CD8-positive, alpha-beta T cell (primary cell): ENCODE measurements at regions of chr3 and their contacts with region 1.

Region 1: GRCh38 chr3:56988458-56989168 is 71.9 kb upstream of the SPATA12 start:
- DNase-seq: peak; percentile 21 to 84 (median 76)
- ATAC-seq: peak; percentile 69
- H3K4me3 ChIP-seq: no peak overlapping the region
- H3K4me3 Mint-ChIP-seq: no peak overlapping the region
- H3K27ac ChIP-seq: no peak overlapping the region
- H3K27ac Mint-ChIP-seq: no peak overlapping the region
- H3K4me1 ChIP-seq: peaks cover 11% of the 10 kb centered on the region
- H3K4me1 Mint-ChIP-seq: peaks cover 11% of the 10 kb centered on the region
- H3K27me3 ChIP-seq: peaks cover 0 to 2% of the 10 kb centered on the region in 2 experiments
- H3K27me3 Mint-ChIP-seq: peaks cover 8% of the 10 kb centered on the region
- CTCF ChIP-seq: peak; percentile 90

Region 2: DNA sequence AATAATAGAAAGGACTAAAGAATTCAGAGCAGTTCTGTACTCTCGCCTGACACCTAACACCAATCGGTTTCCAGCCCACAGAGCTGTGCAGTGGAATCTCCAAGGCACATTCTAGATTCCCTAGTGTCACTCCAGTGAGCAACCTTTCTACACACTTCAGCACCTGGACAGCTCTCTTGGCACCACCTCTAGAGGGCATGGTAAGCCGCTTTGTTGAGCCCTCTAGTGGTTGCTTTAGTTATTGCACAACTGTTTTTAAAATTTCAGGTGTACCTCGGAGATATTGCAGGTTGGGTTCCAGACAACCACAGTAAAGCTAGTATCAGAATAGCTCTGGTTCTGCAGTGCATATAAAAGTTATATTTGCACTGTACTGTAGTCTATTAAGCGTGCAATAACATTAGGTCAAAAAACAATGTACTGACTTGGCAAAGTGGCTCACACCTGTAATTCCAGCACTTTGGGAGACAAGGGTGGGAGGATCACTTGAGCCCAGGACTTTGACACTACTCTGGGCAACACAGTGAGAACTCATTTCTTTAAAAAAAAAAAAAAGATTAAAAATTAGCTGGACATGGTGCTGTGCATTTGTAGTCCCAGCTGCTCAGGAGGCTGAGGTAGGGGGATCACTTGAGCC is 493.8 kb before region 1 on chr3:
- CTCF ChIA-PET with region 1: no interaction called
- POLR2A ChIA-PET with region 1: no interaction called
- intact Hi-C with region 1: loop called in 1 of 2 experiments (anchors 2 kb)
- DNase-seq: peak; percentile 47 to 86 (median 72)
- ATAC-seq: peak; percentile 100
- H3K4me3 ChIP-seq: no peak overlapping the region
- H3K4me3 Mint-ChIP-seq: no peak overlapping the region
- H3K27ac ChIP-seq: no peak overlapping the region
- H3K27ac Mint-ChIP-seq: no peak overlapping the region
- H3K4me1 ChIP-seq: no peaks in the 10 kb centered on the region
- H3K4me1 Mint-ChIP-seq: no peaks in the 10 kb centered on the region
- H3K27me3 ChIP-seq: peaks cover 0 to 4% of the 10 kb centered on the region in 2 experiments
- H3K27me3 Mint-ChIP-seq: peaks cover 30% of the 10 kb centered on the region
- CTCF ChIP-seq: peak; percentile 95

Region 3: DNA sequence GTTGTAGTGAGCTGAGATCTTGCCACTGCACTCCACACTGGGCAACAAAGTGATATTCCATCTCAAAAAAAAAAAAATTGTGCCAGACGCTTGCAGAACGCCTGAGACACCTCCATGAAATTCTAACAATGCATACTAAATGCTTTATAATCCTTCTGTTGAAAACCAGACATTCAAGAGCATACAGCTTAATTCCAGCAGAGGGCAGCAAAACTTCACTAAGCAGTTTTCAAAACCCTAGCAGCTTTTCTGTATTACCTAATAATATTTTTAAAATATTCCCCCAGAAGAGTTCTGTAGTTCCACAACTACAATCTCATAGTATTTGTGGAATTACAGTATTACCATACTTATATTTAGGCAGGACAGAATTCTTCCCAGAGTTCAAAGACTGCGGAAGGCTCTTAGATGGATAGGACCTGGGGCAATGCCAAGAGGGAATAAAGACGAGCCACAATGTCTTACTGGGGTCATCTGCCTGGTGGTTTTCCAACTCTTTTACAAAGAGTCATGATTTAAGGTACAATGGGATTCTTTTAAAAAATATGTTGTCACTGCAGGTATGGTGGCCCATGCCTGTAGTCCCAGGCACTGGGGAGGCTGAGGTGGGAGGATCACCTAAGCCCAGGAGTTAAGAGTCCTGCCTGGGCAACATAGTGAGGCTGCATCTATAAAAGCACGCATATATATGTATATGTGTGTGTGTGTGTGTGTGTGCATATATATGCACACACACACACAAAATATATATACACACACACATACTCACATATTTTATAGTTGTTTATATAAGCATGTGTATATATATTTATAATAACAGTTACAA is 285.9 kb before region 1 on chr3:
- CTCF ChIA-PET with region 1: interaction called, 263 read pairs
- POLR2A ChIA-PET with region 1: interaction called, 5 read pairs
- intact Hi-C with region 1: loop called (anchors 1 kb)
- DNase-seq: peak in 7 of 9 experiments; percentile 37 to 86 (median 60)
- ATAC-seq: peak; percentile 79
- H3K4me3 ChIP-seq: no peak overlapping the region
- H3K4me3 Mint-ChIP-seq: no peak overlapping the region
- H3K27ac ChIP-seq: no peak overlapping the region
- H3K27ac Mint-ChIP-seq: no peak overlapping the region
- H3K4me1 ChIP-seq: peaks cover 20% of the 10 kb centered on the region
- H3K4me1 Mint-ChIP-seq: peaks cover 22% of the 10 kb centered on the region
- H3K27me3 ChIP-seq: no peaks in the 10 kb centered on the region
- H3K27me3 Mint-ChIP-seq: no peaks in the 10 kb centered on the region
- CTCF ChIP-seq: peak; percentile 86

Region 4: DNA sequence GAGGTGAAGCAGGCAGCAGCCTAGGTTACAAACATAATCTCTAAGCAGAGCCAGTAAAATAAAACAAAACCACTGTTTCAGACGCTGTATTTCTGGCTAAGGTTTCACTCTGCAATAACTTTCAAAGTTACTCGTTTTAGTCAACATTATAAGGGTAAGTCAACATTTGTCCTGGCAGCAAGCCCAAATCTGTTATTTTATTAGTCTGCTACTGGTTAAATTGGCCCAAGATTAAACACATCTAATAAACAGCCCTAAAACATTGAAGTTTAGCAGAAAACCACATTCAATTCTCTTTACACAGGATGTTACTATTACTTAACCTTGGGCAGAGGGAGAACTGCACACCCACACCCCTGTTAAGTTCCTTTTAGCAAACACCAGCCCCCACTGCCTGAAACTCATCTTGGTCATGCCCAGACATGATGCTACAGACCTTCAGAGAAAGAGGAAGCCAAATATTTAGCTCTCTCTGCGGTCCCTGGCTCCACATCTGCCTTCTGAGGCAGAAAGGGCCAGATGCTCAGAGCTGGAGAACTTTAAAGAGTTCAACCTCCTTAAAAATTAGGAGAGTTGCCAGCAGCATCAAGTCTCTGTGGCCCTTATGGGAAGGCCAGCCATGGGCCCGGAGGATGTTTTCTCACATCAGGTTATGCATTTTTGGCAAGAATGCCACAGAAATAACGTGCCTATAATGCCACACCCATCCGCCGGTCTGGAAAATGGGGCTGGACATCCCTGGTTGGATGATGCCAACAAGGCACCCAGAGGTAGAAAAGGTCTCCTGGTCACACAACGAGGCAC is 204.8 kb before region 1 on chr3:
- CTCF ChIA-PET with region 1: interaction called, 10 read pairs
- POLR2A ChIA-PET with region 1: no interaction called
- intact Hi-C with region 1: no loop called
- DNase-seq: peak; percentile 46 to 91 (median 75)
- ATAC-seq: peak; percentile 79
- H3K4me3 ChIP-seq: peak overlapping the region; percentile 10 to 24
- H3K4me3 Mint-ChIP-seq: peak overlapping the region; percentile 67
- H3K27ac ChIP-seq: peak overlapping the region; percentile 51 to 80
- H3K27ac Mint-ChIP-seq: peak overlapping the region; percentile 88
- H3K4me1 ChIP-seq: peaks cover 98% of the 10 kb centered on the region
- H3K4me1 Mint-ChIP-seq: peaks cover 97% of the 10 kb centered on the region
- H3K27me3 ChIP-seq: no peaks in the 10 kb centered on the region
- H3K27me3 Mint-ChIP-seq: no peaks in the 10 kb centered on the region
- CTCF ChIP-seq: no peak

Region 5: GRCh38 chr3:56855856-56856512 is 132.6 kb before region 1 on chr3:
- CTCF ChIA-PET with region 1: interaction called, 5 read pairs
- POLR2A ChIA-PET with region 1: no interaction called
- intact Hi-C with region 1: loop called (anchors 1 kb)
- DNase-seq: peak in 6 of 9 experiments; percentile 20 to 53 (median 26)
- ATAC-seq: no peak
- H3K4me3 ChIP-seq: no peak overlapping the region
- H3K4me3 Mint-ChIP-seq: no peak overlapping the region
- H3K27ac ChIP-seq: no peak overlapping the region
- H3K27ac Mint-ChIP-seq: peak overlapping the region; percentile 32
- H3K4me1 ChIP-seq: peaks cover 9% of the 10 kb centered on the region
- H3K4me1 Mint-ChIP-seq: peaks cover 48% of the 10 kb centered on the region
- H3K27me3 ChIP-seq: no peaks in the 10 kb centered on the region
- H3K27me3 Mint-ChIP-seq: no peaks in the 10 kb centered on the region
- CTCF ChIP-seq: peak; percentile 29

Region 6: GRCh38 chr3:56904552-56905215 is 83.9 kb before region 1 on chr3:
- CTCF ChIA-PET with region 1: interaction called, 14 read pairs
- POLR2A ChIA-PET with region 1: no interaction called
- intact Hi-C with region 1: no loop called
- DNase-seq: no peak
- ATAC-seq: no peak
- H3K4me3 ChIP-seq: no peak overlapping the region
- H3K4me3 Mint-ChIP-seq: no peak overlapping the region
- H3K27ac ChIP-seq: no peak overlapping the region
- H3K27ac Mint-ChIP-seq: no peak overlapping the region
- H3K4me1 ChIP-seq: peaks cover 19% of the 10 kb centered on the region
- H3K4me1 Mint-ChIP-seq: peaks cover 72% of the 10 kb centered on the region
- H3K27me3 ChIP-seq: no peaks in the 10 kb centered on the region
- H3K27me3 Mint-ChIP-seq: no peaks in the 10 kb centered on the region
- CTCF ChIP-seq: no peak

Region 7: DNA sequence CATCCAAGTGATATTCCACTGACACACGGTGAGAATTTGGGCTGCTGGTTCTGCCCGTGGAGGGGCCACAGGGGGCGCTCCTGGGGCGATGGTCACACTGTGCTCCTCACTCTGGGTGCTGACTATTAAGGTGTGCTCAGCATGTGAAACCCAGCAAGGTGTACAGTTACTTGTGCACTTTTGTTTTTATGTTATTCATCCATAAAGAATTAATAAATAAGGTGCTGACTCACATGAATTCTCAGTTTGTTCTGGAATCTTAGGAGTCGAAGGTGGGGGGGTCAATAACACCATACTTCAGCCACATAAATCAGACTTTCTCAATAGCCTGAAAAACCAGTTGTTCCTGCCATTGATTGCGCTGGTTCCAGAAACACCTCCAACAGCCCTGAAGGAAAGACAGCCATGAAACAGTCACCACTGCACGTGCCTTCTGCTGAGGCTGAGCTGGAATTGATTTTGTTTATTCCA is 18.4 kb after region 1 on chr3:
- CTCF ChIA-PET with region 1: interaction called, 11 read pairs
- POLR2A ChIA-PET with region 1: no interaction called
- intact Hi-C with region 1: no loop called
- DNase-seq: no peak
- ATAC-seq: no peak
- H3K4me3 ChIP-seq: no peak overlapping the region
- H3K4me3 Mint-ChIP-seq: no peak overlapping the region
- H3K27ac ChIP-seq: no peak overlapping the region
- H3K27ac Mint-ChIP-seq: no peak overlapping the region
- H3K4me1 ChIP-seq: no peaks in the 10 kb centered on the region
- H3K4me1 Mint-ChIP-seq: peaks cover 5% of the 10 kb centered on the region
- H3K27me3 ChIP-seq: no peaks in the 10 kb centered on the region
- H3K27me3 Mint-ChIP-seq: peaks cover 6% of the 10 kb centered on the region
- CTCF ChIP-seq: no peak

Region 8: GRCh38 chr3:57434041-57434440 is 445.4 kb after region 1 on chr3:
- CTCF ChIA-PET with region 1: no interaction called
- POLR2A ChIA-PET with region 1: no interaction called
- intact Hi-C with region 1: no loop called
- DNase-seq: peak in 1 of 9 experiments; percentile 7
- ATAC-seq: no peak
- H3K4me3 ChIP-seq: no peak overlapping the region
- H3K4me3 Mint-ChIP-seq: no peak overlapping the region
- H3K27ac ChIP-seq: no peak overlapping the region
- H3K27ac Mint-ChIP-seq: no peak overlapping the region
- H3K4me1 ChIP-seq: no peaks in the 10 kb centered on the region
- H3K4me1 Mint-ChIP-seq: no peaks in the 10 kb centered on the region
- H3K27me3 ChIP-seq: no peaks in the 10 kb centered on the region
- H3K27me3 Mint-ChIP-seq: peaks cover 3% of the 10 kb centered on the region
- CTCF ChIP-seq: no peak